GM12878 (cell line): ENCODE measurements at regions of chr7 and their contacts with region 1.

Region 1: GRCh38 chr7:24979863-24980533 is at the start of gene OSBPL3:
- DNase-seq: peak; percentile 78
- ATAC-seq: peak; percentile 81
- H3K4me3 ChIP-seq: peak within 1 kb of the TSS; percentile 78
- H3K27ac ChIP-seq: peak within 1 kb of the TSS; percentile 78
- H3K4me1 ChIP-seq: peaks cover 5% of the 10 kb centered on the region
- H3K27me3 ChIP-seq: no peaks in the 10 kb centered on the region
- CTCF ChIP-seq: peak in 1 of 3 experiments; percentile 44; a peak in 2 of 6 replicates
- EP300 ChIP-seq: no peak
- POLR2A ChIP-seq: peak; percentile 87
- RAD21 ChIP-seq: peak; percentile 48
- polyA plus RNA-seq, gene OSBPL3: 6.1 to 15.2 TPM

Region 2: DNA sequence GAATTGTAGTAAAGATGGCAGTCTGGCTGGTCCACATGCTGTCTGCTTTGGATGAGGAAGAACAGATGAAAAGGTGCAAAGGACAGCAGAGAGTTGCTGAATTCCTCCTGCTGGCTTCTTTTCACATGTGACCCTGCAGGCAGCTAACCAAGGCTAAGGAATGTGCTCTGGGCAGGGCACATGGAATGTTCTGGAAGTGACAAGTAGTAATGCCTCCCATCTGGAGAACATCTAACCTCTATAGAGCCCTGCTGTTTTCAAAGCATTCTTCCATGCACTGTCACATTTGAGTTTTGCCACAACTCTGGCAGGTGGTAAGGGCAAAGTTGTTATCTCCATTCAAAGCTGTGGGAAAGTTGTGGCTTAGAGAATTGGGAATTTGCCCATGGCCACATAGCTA is 1061.1 kb before region 1 on chr7:
- CTCF ChIA-PET with region 1: no interaction called
- POLR2A ChIA-PET with region 1: no interaction called
- RAD21 ChIA-PET with region 1: no interaction called
- SMC1A ChIA-PET with region 1: no interaction called
- in situ Hi-C with region 1: no loop called
- intact Hi-C with region 1: no loop called
- DNase-seq: no peak
- ATAC-seq: no peak
- H3K4me3 ChIP-seq: no peak overlapping the region
- H3K27ac ChIP-seq: no peak overlapping the region
- H3K4me1 ChIP-seq: no peaks in the 10 kb centered on the region
- H3K27me3 ChIP-seq: no peaks in the 10 kb centered on the region
- CTCF ChIP-seq: no peak
- EP300 ChIP-seq: no peak
- POLR2A ChIP-seq: no peak
- RAD21 ChIP-seq: no peak

Region 3: GRCh38 chr7:24304494-24305095 is 675.4 kb before region 1 on chr7:
- CTCF ChIA-PET with region 1: no interaction called
- POLR2A ChIA-PET with region 1: no interaction called
- RAD21 ChIA-PET with region 1: no interaction called
- SMC1A ChIA-PET with region 1: no interaction called
- in situ Hi-C with region 1: no loop called
- intact Hi-C with region 1: no loop called
- DNase-seq: no peak
- ATAC-seq: peak; percentile 44; the same call in 2 of the 3 replicates
- H3K4me3 ChIP-seq: no peak overlapping the region
- H3K27ac ChIP-seq: no peak overlapping the region
- H3K4me1 ChIP-seq: no peaks in the 10 kb centered on the region
- H3K27me3 ChIP-seq: no peaks in the 10 kb centered on the region
- CTCF ChIP-seq: no peak
- EP300 ChIP-seq: no peak
- POLR2A ChIP-seq: no peak
- RAD21 ChIP-seq: no peak

Region 4: GRCh38 chr7:24366876-24367275 is 613.1 kb before region 1 on chr7:
- CTCF ChIA-PET with region 1: no interaction called
- POLR2A ChIA-PET with region 1: no interaction called
- RAD21 ChIA-PET with region 1: no interaction called
- SMC1A ChIA-PET with region 1: no interaction called
- in situ Hi-C with region 1: no loop called
- intact Hi-C with region 1: no loop called
- DNase-seq: no peak
- ATAC-seq: no peak
- H3K4me3 ChIP-seq: no peak overlapping the region
- H3K27ac ChIP-seq: no peak overlapping the region
- H3K4me1 ChIP-seq: no peaks in the 10 kb centered on the region
- H3K27me3 ChIP-seq: no peaks in the 10 kb centered on the region
- CTCF ChIP-seq: no peak
- EP300 ChIP-seq: no peak
- POLR2A ChIP-seq: no peak
- RAD21 ChIP-seq: no peak

Region 5: GRCh38 chr7:24555184-24555583 is 424.8 kb before region 1 on chr7:
- CTCF ChIA-PET with region 1: no interaction called
- POLR2A ChIA-PET with region 1: no interaction called
- RAD21 ChIA-PET with region 1: no interaction called
- SMC1A ChIA-PET with region 1: no interaction called
- in situ Hi-C with region 1: no loop called
- intact Hi-C with region 1: no loop called
- DNase-seq: no peak
- ATAC-seq: no peak
- H3K4me3 ChIP-seq: no peak overlapping the region
- H3K27ac ChIP-seq: no peak overlapping the region
- H3K4me1 ChIP-seq: no peaks in the 10 kb centered on the region
- H3K27me3 ChIP-seq: no peaks in the 10 kb centered on the region; a peak in 2 of 4 replicates
- CTCF ChIP-seq: no peak
- EP300 ChIP-seq: no peak
- POLR2A ChIP-seq: no peak
- RAD21 ChIP-seq: no peak

Region 6: DNA sequence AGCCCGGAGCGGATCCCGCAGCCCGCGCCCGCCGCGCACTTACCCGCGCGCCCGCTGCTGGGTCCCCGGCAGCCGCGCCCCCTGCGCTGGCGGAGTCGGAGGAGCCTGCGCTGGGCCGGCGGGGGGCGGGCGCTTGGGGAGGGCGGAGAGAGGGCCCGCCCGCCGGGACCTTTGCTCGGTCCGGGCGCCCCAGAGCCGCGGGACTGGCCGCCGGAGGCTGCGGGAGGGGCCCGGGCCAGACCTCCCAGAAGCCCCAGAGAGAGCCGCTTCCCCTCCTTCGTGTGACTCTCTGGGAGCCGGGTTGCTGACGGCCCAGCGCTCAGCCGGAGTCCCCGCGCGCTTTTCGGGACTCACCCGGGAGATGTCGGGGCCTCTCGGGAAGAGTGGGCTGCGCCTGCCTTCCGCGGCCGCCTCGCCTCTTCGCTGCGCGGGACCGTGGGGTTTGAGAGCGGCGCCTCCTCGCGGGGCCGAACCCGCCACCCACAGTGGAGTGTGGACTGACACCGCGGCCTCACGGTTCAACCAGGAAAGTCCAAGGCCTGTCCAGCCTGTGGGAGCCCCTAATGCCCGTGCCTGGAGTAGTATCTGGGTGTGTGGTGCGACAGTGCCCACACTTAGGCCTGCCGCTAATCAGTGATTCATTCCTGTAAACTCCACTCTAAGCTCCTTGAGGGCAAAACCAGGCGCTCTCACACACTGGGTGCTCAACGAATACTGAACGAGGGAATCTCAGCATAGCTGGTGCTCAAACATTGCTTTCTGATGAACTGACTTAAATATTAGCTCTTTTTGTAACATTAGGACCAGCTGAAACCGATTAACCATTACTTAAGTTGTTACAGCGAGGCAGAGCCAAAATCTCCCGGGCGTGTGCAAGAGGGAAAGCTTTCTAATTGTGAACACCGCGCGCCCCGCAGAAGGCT is 222.4 kb before region 1 on chr7 and contains the start of gene GSDME:
- CTCF ChIA-PET with region 1: no interaction called
- POLR2A ChIA-PET with region 1: no interaction called
- RAD21 ChIA-PET with region 1: no interaction called
- SMC1A ChIA-PET with region 1: no interaction called
- in situ Hi-C with region 1: no loop called
- intact Hi-C with region 1: loop called (anchors 5 kb)
- DNase-seq: no peak
- ATAC-seq: peak; percentile 85
- H3K4me3 ChIP-seq: peak within 1 kb of the TSS; percentile 88
- H3K27ac ChIP-seq: peak within 1 kb of the TSS; percentile 93
- H3K4me1 ChIP-seq: peaks cover 40% of the 10 kb centered on the region
- H3K27me3 ChIP-seq: no peaks in the 10 kb centered on the region
- CTCF ChIP-seq: no peak
- EP300 ChIP-seq: no peak
- POLR2A ChIP-seq: peak; percentile 60; the same call in 1 of the 2 replicates
- RAD21 ChIP-seq: no peak
- polyA plus RNA-seq, gene GSDME: 62.5 to 83.7 TPM

Region 7: GRCh38 chr7:24836084-24836483 is 143.9 kb before region 1 on chr7:
- CTCF ChIA-PET with region 1: interaction called, 8 read pairs
- POLR2A ChIA-PET with region 1: interaction called, 7 read pairs
- RAD21 ChIA-PET with region 1: interaction called, 22 read pairs
- SMC1A ChIA-PET with region 1: interaction called, 14 read pairs
- in situ Hi-C with region 1: no loop called
- intact Hi-C with region 1: no loop called
- DNase-seq: peak; percentile 76
- ATAC-seq: peak; percentile 85
- H3K4me3 ChIP-seq: 0 out of 2 replicates have a peak overlapping the region, but pooled peaks have one; percentile 9
- H3K27ac ChIP-seq: peak overlapping the region; percentile 29; the same call in 1 of the 2 replicates
- H3K4me1 ChIP-seq: peaks cover 48% of the 10 kb centered on the region
- H3K27me3 ChIP-seq: no peaks in the 10 kb centered on the region
- CTCF ChIP-seq: no peak
- EP300 ChIP-seq: peak; percentile 60 to 70; a peak in 3 of 4 replicates
- POLR2A ChIP-seq: no peak
- RAD21 ChIP-seq: no peak

Region 8: GRCh38 chr7:24896031-24896501 is 83.9 kb before region 1 on chr7:
- CTCF ChIA-PET with region 1: interaction called, 116 read pairs
- POLR2A ChIA-PET with region 1: interaction called, 4 read pairs
- RAD21 ChIA-PET with region 1: interaction called, 13 read pairs
- SMC1A ChIA-PET with region 1: interaction called, 102 read pairs
- in situ Hi-C with region 1: no loop called
- intact Hi-C with region 1: no loop called
- DNase-seq: peak; percentile 52
- ATAC-seq: peak; percentile 70
- H3K4me3 ChIP-seq: no peak overlapping the region
- H3K27ac ChIP-seq: peak overlapping the region; percentile 75
- H3K4me1 ChIP-seq: peaks cover 57% of the 10 kb centered on the region
- H3K27me3 ChIP-seq: no peaks in the 10 kb centered on the region
- CTCF ChIP-seq: peak in 1 of 3 experiments; percentile 45; a peak in 2 of 6 replicates
- EP300 ChIP-seq: peak; percentile 55 to 79; a peak in 3 of 4 replicates
- POLR2A ChIP-seq: no peak
- RAD21 ChIP-seq: peak; percentile 40; the same call in 1 of the 2 replicates

Region 9: GRCh38 chr7:24936121-24936824 is 43.7 kb before region 1 on chr7:
- CTCF ChIA-PET with region 1: interaction called, 7 read pairs
- POLR2A ChIA-PET with region 1: interaction called, 3 read pairs
- RAD21 ChIA-PET with region 1: interaction called, 5 read pairs
- SMC1A ChIA-PET with region 1: interaction called, 12 read pairs
- in situ Hi-C with region 1: no loop called
- intact Hi-C with region 1: no loop called
- DNase-seq: peak; percentile 34
- ATAC-seq: peak; percentile 76
- H3K4me3 ChIP-seq: peak overlapping the region; percentile 52; the same call in 1 of the 2 replicates
- H3K27ac ChIP-seq: peak overlapping the region; percentile 35
- H3K4me1 ChIP-seq: peaks cover 40% of the 10 kb centered on the region
- H3K27me3 ChIP-seq: no peaks in the 10 kb centered on the region
- CTCF ChIP-seq: no peak
- EP300 ChIP-seq: no peak
- POLR2A ChIP-seq: no peak
- RAD21 ChIP-seq: no peak

Region 10: DNA sequence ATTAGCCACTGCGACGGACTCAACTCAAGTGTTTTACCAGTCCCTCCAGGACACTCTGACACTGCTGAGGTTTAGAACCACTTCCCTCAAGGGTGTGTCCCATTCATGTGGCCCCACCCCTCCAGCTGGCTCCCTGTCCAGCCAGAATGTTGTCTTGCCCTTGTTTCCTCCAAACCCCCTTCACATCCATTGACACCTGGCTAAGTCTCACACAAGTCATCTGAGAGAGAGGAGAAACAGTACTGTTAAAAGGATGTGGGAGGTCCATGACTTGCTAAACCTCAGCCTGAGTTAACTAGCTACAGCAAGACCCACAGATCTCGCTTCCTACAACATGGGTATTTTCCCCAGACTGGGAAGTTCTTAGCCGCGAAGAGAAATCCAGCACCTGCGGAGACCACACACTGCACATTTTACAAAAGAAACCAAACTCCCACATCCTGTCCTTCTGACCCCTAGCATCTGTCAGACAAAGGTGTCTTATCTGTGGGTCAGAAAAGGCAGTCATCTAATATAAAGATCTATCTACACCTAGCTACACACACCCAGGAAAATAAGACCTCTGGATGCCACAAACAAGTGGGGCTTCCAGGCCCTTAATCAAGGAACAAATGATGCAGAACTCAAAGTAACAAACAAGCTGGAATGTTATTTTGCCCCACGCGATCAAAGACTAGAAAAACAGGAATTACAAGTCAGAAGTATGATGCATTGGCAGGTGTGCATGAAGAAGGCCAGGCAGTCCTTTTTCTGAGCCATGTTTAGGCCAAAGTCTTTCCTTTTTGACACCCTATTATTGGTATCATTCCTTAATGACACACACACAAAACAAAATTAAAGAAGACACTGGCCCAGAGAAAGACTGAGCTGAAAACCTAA is 13.9 kb before region 1 on chr7:
- CTCF ChIA-PET with region 1: interaction called, 43 read pairs
- POLR2A ChIA-PET with region 1: interaction called, 68 read pairs
- RAD21 ChIA-PET with region 1: interaction called, 106 read pairs
- SMC1A ChIA-PET with region 1: interaction called, 189 read pairs
- in situ Hi-C with region 1: no loop called
- intact Hi-C with region 1: no loop called
- DNase-seq: peak; percentile 98
- ATAC-seq: peak; percentile 78
- H3K4me3 ChIP-seq: peak overlapping the region; percentile 44; the same call in 1 of the 2 replicates
- H3K27ac ChIP-seq: peak overlapping the region; percentile 82
- H3K4me1 ChIP-seq: peaks cover 65% of the 10 kb centered on the region
- H3K27me3 ChIP-seq: no peaks in the 10 kb centered on the region
- CTCF ChIP-seq: no peak
- EP300 ChIP-seq: peak; percentile 93 to 97
- POLR2A ChIP-seq: no peak; the same call in 1 of the 2 replicates
- RAD21 ChIP-seq: 0 out of 2 replicates have a peak, but pooled peaks have one; percentile 15

Region 11: GRCh38 chr7:25093268-25093826 is 113.3 kb after region 1 on chr7:
- CTCF ChIA-PET with region 1: interaction called, 112 read pairs
- POLR2A ChIA-PET with region 1: interaction called, 3 read pairs
- RAD21 ChIA-PET with region 1: interaction called, 11 read pairs
- SMC1A ChIA-PET with region 1: interaction called, 29 read pairs
- in situ Hi-C with region 1: no loop called
- intact Hi-C with region 1: loop called (anchors 2 kb)
- DNase-seq: no peak
- ATAC-seq: peak; percentile 96
- H3K4me3 ChIP-seq: no peak overlapping the region
- H3K27ac ChIP-seq: no peak overlapping the region
- H3K4me1 ChIP-seq: peaks cover 4% of the 10 kb centered on the region
- H3K27me3 ChIP-seq: no peaks in the 10 kb centered on the region
- CTCF ChIP-seq: peak; percentile 84 to 90 (median 89)
- EP300 ChIP-seq: no peak
- POLR2A ChIP-seq: no peak
- RAD21 ChIP-seq: peak; percentile 90